ENCODE measurements at regions of chr5 and their contacts with region 1.

Region 1: DNA sequence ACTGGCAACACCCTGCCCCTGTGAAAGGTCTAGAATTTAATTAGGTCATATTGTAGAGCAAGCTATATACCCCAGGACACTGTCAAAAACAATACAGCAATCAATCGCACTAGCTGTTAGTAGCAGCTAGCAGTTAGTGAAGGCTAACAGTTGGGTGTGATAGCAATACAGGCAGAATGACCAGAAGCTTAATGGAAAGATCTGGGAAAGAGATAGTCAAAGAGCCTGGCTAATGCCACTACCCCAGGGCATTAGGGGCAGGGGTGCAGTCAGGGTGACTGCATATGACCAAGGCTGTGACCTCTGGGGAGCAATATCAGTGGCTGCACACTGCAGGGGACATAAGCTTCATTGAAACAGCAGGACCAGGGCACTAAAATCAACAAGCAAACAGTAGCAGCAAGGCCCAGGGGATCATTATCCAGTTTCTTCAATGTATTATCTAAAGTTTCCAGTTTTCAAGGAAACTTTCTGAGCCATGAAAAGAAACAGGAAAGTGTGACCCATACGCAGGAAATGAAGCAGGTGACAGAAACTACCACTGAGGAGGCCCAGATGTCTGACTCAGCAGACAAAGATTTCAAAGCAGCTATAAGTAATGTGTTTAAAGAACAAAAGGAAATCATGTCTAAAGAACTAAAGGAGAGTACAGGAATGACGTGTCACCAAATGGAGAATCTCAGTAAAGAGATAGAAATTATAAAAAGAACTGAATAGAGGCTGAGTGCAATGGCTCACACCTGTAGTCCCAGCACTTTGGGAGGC is 82.4 kb downstream of the ZNF354C start:
- DNase-seq: peak; percentile 75
- H3K4me3 Mint-ChIP-seq: no peak overlapping the region
- H3K27ac Mint-ChIP-seq: peak overlapping the region; percentile 79
- H3K4me1 Mint-ChIP-seq: peaks cover 48% of the 10 kb centered on the region
- H3K27me3 Mint-ChIP-seq: no peaks in the 10 kb centered on the region

Region 2: GRCh38 chr5:178626484-178627258 is 515.9 kb before region 1 on chr5 and contains the start of gene CLK4:
- CTCF ChIA-PET with region 1: no interaction called
- intact Hi-C with region 1: loop called (anchors 2 kb)
- DNase-seq: peak; percentile 97
- H3K4me3 Mint-ChIP-seq: peak within 1 kb of the TSS; percentile 97
- H3K27ac Mint-ChIP-seq: peak within 1 kb of the TSS; percentile 95
- H3K4me1 Mint-ChIP-seq: peaks cover 28% of the 10 kb centered on the region
- H3K27me3 Mint-ChIP-seq: no peaks in the 10 kb centered on the region
- total RNA-seq, gene CLK4: 33.9 to 34.9 TPM

Region 3: GRCh38 chr5:179023528-179024430 is 118.8 kb before region 1 on chr5 and contains the start of gene ZNF879:
- CTCF ChIA-PET with region 1: no interaction called
- intact Hi-C with region 1: loop called (anchors 5 kb)
- DNase-seq: peak; percentile 95
- H3K4me3 Mint-ChIP-seq: peak within 1 kb of the TSS; percentile 97
- H3K27ac Mint-ChIP-seq: peak within 1 kb of the TSS; percentile 90
- H3K4me1 Mint-ChIP-seq: peaks cover 7% of the 10 kb centered on the region
- H3K27me3 Mint-ChIP-seq: peaks cover 1% of the 10 kb centered on the region
- total RNA-seq, gene ZNF879: 1.8 to 2.0 TPM

Region 4: GRCh38 chr5:179166886-179167841 is 24.5 kb after region 1 on chr5:
- CTCF ChIA-PET with region 1: interaction called, 5 read pairs
- intact Hi-C with region 1: loop called (anchors 1 kb)
- DNase-seq: peak; percentile 76
- H3K4me3 Mint-ChIP-seq: no peak overlapping the region
- H3K27ac Mint-ChIP-seq: no peak overlapping the region
- H3K4me1 Mint-ChIP-seq: peaks cover 3% of the 10 kb centered on the region
- H3K27me3 Mint-ChIP-seq: peaks cover 5% of the 10 kb centered on the region

Region 5: DNA sequence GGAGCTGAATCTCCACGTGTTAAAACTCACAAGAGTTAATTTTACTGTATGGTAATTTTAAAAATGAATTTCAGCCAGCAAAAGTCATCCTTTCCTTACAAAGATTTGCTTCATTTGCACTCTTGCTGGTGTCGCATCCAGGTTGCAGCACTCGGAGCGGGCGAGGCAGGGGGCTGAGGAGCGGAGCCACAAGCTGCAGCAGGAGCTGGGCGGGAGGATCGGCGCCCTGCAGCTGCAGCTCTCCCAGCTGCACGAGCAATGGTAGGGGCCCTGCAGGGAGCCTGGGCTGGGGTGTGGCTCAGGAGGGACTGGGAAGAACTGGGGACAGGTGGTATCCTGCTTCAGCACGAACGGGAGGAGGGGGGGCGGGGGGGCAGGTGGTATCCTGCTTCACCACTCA is 453.8 kb after region 1 on chr5:
- CTCF ChIA-PET with region 1: no interaction called
- intact Hi-C with region 1: no loop called
- DNase-seq: no peak
- H3K4me3 Mint-ChIP-seq: no peak overlapping the region
- H3K27ac Mint-ChIP-seq: no peak overlapping the region
- H3K4me1 Mint-ChIP-seq: no peaks in the 10 kb centered on the region
- H3K27me3 Mint-ChIP-seq: no peaks in the 10 kb centered on the region

Region 6: GRCh38 chr5:180071531-180072255 is 929.1 kb after region 1 on chr5 and contains the start of gene RNF130:
- CTCF ChIA-PET with region 1: no interaction called
- intact Hi-C with region 1: loop called (anchors 10 kb)
- DNase-seq: peak; percentile 86
- H3K4me3 Mint-ChIP-seq: peak within 1 kb of the TSS; percentile 75
- H3K27ac Mint-ChIP-seq: peak within 1 kb of the TSS; percentile 32
- H3K4me1 Mint-ChIP-seq: peaks cover 23% of the 10 kb centered on the region
- H3K27me3 Mint-ChIP-seq: peaks cover 3% of the 10 kb centered on the region
- total RNA-seq, gene RNF130: 10.3 to 11.9 TPM